A549 (cell line): ENCODE measurements at regions of chr17 and their contacts with region 1.

Region 1: DNA sequence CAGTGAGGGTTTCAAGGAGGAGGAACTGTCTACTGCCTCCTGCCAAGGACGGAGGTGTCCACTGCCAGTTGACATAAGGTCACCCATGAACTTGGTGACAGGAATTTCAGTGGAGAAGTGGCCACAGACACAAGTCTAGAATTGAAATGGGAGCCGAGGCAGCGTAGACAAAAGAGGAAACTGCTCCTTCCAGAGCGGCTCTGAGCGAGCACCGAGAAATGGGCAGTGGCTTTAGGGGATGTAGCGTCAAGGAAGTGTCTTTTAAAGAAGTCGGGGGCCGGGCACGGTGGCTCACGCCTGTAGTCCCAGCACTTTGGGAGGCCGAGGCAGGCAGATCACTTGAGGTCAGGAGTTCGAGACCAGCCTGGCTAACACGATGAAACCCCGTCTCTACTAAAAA is 3.1 kb upstream of the SERPINF1 start:
- DNase-seq: no peak
- ATAC-seq: no peak
- H3K4me3 ChIP-seq: no peak overlapping the region
- H3K27ac ChIP-seq: no peak overlapping the region
- H3K4me1 ChIP-seq: peaks cover 20% of the 10 kb centered on the region
- CTCF ChIP-seq: no peak
- EP300 ChIP-seq: no peak
- POLR2A ChIP-seq: no peak
- RAD21 ChIP-seq: no peak

Region 2: DNA sequence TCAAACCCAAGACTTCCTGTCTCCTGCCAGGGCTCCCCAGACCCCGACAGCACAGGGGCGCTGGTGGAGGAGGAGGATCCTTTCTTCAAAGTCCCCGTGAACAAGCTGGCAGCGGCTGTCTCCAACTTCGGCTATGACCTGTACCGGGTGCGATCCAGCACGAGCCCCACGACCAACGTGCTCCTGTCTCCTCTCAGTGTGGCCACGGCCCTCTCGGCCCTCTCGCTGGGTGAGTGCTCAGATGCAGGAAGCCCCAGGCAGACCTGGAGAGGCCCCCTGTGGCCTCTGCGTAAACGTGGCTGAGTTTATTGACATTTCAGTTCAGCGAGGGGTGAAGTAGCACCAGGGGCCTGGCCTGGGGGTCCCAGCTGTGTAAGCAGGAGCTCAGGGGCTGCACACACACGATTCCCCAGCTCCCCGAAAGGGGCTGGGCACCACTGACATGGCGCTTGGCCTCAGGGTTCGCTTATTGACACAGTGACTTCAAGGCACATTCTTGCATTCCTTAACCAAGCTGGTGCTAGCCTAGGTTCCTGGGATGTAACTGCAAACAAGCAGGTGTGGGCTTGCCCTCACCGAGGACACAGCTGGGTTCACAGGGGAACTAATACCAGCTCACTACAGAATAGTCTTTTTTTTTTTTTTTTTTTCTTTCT is 11.1 kb after region 1 on chr17:
- CTCF ChIA-PET with region 1: interaction called, 16 read pairs
- POLR2A ChIA-PET with region 1: interaction called, 4 read pairs
- DNase-seq: peak; percentile 61 to 78
- ATAC-seq: peak; percentile 79
- H3K4me3 ChIP-seq: no peak overlapping the region
- H3K27ac ChIP-seq: peak overlapping the region; percentile 60 to 83
- H3K4me1 ChIP-seq: peaks cover 11% of the 10 kb centered on the region
- CTCF ChIP-seq: no peak
- EP300 ChIP-seq: no peak
- POLR2A ChIP-seq: no peak
- RAD21 ChIP-seq: no peak